ENCODE measurements at regions of chr13 and their contacts with region 1.

Region 1: DNA sequence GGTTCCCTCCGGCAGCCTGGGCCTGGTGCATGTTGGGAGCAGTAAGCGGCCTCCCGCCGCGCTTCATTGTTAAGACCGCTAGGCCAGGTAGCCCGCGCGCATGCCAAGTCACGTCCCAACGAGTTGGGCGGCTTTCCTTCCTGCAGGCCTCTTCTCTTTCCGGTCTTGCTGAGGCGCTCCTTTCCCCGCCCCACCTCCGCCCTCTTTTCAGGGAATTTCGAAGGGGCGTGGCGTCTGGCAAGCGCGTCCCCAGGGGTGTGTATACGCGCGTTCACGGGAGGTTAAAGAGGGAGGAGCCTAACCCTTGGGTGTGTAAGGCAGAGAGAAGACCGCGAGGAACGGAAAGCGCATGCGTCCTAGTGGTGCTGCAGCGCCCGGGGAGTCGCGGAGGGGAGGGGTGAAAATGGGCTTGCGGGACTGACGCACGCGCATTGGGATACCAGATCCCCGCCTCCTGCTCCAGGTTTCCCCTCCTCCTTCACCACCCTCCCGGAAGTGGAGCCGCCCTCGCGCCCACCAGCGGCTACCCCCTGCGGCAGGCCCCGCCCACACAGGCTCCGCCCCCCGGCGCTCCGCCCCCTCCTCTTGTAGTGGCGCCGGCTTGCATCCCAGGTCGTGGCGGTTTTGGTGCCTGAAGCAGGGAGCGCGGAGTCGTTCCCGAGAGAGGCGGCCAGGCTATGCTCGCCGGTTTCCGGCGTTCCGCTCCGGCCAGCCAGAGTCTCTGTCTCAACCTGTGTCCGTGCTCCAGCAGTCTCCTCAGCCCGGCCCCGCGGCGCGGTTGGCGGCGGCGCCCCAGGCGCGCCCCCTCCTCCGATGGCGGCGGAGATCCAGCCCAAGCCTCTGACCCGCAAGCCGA is at the start of gene WDFY2:
- DNase-seq: peak; percentile 100
- ATAC-seq: peak; percentile 90 to 95 (median 91)
- H3K4me3 ChIP-seq: peak within 1 kb of the TSS; percentile 87 to 92 (median 89)
- H3K27ac ChIP-seq: peak within 1 kb of the TSS; percentile 81 to 88 (median 87)
- H3K4me1 ChIP-seq: peaks cover 0 to 8% (median 1%) of the 10 kb centered on the region in 4 donors
- H3K27me3 ChIP-seq: no peaks in the 10 kb centered on the region
- CTCF ChIP-seq: peak in 2 of 4 donors; percentile 26 to 33
- POLR2A ChIP-seq: peak; percentile 95
- total RNA-seq, gene WDFY2: 4.5 to 12.0 (median 7.3) TPM

Region 2: DNA sequence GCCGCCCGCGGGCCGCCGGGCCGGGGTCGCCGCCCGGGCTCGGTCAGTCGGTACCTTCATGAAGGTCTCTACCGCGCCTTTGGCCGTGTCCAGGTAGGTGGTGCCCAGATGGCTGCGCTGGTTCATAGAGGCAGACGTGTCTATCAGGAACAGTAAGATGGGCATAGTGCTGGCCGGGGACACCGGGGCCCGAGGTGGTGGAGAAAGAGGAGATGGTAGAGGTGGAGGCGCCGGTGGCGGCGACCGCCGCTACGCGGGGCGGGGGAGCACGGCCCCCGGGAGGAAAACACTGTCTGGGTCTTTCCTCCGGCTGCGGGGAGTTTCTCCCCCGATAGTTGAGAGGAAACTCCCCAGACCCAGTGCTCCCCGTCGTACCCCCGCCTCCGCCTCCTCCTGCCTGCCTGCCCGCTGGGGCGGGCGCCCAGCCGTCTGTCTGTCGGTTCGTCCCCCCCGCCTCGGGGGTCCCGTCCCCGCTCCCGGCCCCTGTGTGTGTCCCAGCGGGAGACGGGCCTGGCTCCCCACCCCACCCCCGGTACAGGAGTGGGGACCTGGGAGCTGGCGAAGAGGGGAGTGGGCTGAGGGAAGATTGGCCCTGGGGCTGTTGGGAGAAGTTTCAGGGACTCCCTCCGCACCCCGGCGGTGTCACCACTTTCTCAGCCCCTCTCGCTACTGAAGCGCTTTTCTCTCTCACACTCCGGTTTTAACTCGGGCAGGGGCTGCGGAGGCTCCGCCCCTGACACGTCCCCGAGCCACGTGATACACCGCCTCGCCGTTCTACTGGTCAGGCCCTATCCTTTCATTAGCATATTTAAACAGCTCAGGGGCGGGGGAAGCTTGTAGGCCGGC is 131.5 kb before region 1 on chr13 and contains the start of gene INTS6:
- intact Hi-C with region 1: loop called in 1 of 2 experiments (anchors 10 kb)
- DNase-seq: peak; percentile 99 to 100 (median 99)
- ATAC-seq: peak; percentile 83 to 91 (median 84)
- H3K4me3 ChIP-seq: peak within 1 kb of the TSS; percentile 85 to 90 (median 86)
- H3K27ac ChIP-seq: peak within 1 kb of the TSS; percentile 98 to 99 (median 99)
- H3K4me1 ChIP-seq: peaks cover 0 to 24% (median 9%) of the 10 kb centered on the region in 4 donors
- H3K27me3 ChIP-seq: no peaks in the 10 kb centered on the region
- CTCF ChIP-seq: no peak
- POLR2A ChIP-seq: peak; percentile 99
- total RNA-seq, gene INTS6: 21.7 to 40.8 (median 32.7) TPM

Measured in right lobe of liver (tissue), 6 donors.